ENCODE measurements at regions of chr3 and their contacts with region 1.

Region 1: GRCh38 chr3:23202921-23203707 is at the start of gene UBE2E2:
- DNase-seq: peak; percentile 75
- H3K4me3 Mint-ChIP-seq: peak within 1 kb of the TSS; percentile 84
- H3K27ac Mint-ChIP-seq: peak within 1 kb of the TSS; percentile 76
- H3K4me1 Mint-ChIP-seq: peaks cover 8% of the 10 kb centered on the region
- H3K27me3 Mint-ChIP-seq: peaks cover 43% of the 10 kb centered on the region
- CTCF ChIP-seq: no peak
- total RNA-seq, gene UBE2E2: 19.1 and 25.1 TPM in 2 replicates

Region 2: GRCh38 chr3:23219117-23219516 is 16.0 kb after region 1 on chr3:
- CTCF ChIA-PET with region 1: no interaction called
- intact Hi-C with region 1: loop called (anchors 2 kb)
- DNase-seq: peak; percentile 15
- H3K4me3 Mint-ChIP-seq: no peak overlapping the region
- H3K27ac Mint-ChIP-seq: no peak overlapping the region
- H3K4me1 Mint-ChIP-seq: peaks cover 15% of the 10 kb centered on the region
- H3K27me3 Mint-ChIP-seq: no peaks in the 10 kb centered on the region
- CTCF ChIP-seq: no peak

Region 3: DNA sequence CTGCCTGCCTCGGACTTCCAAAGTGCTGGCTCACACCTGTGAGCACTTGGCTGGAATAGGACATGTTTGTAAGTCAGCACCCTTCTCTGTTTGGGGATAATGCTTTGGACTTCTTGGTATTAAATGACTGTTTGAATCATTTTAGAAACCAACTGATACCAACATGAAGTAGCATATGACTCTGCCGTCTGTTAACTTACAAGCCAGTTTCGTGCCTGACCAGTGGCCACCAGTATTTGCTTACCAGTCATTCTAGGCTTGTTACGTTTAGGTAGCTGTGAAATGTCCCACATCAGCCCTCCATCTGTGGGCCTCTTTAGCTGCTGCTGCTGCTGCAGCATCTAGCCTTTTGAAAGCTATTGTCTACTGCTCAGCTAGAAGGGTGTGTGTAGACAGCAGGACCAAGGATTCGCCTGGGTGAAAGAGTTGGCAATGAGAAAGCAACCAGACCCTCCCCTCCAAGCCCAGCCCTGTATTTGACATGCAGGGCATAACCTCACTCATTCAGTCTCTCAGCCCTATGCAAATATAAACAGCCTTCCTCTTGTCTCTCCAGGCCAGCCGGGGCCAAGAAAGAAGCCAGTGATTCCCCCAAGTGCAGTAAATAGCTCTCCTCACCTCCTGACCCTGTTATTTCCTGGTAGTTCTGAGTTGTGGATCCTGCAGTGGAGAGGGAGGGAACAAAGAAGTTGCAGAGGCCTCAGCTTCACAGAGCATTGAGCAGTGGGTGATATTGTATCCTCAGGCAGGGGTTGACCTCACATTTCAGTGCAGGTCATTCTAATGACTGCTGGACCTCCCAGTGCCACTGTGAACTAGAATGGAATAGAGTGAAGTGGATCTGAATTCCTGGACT is 662.7 kb after region 1 on chr3:
- CTCF ChIA-PET with region 1: no interaction called
- intact Hi-C with region 1: loop called (anchors 10 kb)
- DNase-seq: peak; percentile 27
- H3K4me3 Mint-ChIP-seq: no peak overlapping the region
- H3K27ac Mint-ChIP-seq: no peak overlapping the region
- H3K4me1 Mint-ChIP-seq: peaks cover 11% of the 10 kb centered on the region
- H3K27me3 Mint-ChIP-seq: no peaks in the 10 kb centered on the region
- CTCF ChIP-seq: no peak

Measured in Calu3 (cell line).